ENCODE measurements at regions of chr22 and their contacts with region 1.

Region 1: GRCh38 chr22:35299673-35300497 is at the start of gene TOM1:
- DNase-seq: peak; percentile 95 to 99 (median 98)
- ATAC-seq: peak; percentile 84
- H3K4me3 ChIP-seq: peak within 1 kb of the TSS; percentile 63
- H3K4me3 Mint-ChIP-seq: peak within 1 kb of the TSS; percentile 100
- H3K27ac ChIP-seq: peak within 1 kb of the TSS; percentile 87 to 96
- H3K27ac Mint-ChIP-seq: peak within 1 kb of the TSS; percentile 96
- H3K4me1 ChIP-seq: peaks cover 46% of the 10 kb centered on the region
- H3K4me1 Mint-ChIP-seq: peaks cover 44% of the 10 kb centered on the region
- H3K27me3 ChIP-seq: no peaks in the 10 kb centered on the region
- H3K27me3 Mint-ChIP-seq: no peaks in the 10 kb centered on the region
- CTCF ChIP-seq: no peak
- total RNA-seq, gene TOM1: 211 to 219 TPM

Region 2: DNA sequence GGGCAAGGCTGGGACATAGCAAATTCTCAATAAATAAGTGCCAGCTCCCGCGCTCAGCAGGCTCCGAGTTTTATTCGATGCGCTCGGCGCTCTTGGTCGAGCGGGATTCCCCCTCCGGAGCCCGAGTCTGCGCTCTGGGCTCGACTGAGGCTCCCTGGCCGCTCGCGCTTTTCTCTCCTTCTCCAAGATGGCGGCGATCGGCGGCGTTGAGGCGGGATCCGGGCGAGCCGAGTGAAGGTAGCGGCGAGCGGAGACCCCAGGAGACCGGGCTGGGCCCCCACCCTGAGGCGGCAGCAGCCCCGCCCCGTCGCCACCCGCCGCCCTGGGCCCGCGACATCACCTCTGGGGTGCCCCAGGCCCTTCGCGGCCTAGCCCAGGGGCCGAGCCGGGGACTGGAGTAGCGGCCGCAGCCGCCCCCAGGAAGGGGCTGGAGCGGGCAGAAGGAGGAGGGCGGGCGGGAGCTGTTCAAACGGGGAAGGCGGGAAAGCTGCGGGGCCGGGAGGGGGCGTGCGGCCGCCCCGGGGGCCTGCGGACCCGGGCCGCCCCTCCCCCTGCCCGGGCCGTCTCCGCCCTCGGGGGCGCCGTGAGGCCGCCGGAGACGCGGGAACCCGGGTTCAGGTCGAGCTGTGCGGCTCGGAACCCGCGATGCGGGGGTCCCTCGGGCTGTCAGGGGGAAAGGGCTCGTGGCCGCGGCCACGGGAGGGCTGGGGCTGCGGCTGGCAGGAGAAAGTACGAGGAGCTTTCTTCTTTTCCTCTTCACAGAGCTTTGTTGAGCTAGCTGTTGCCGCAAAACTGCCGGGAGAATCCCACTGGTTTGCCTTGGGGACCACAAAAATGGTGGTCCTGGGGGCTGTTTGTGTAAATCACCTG is 42.3 kb before region 1 on chr22 and contains the start of gene HMGXB4:
- CTCF ChIA-PET with region 1: interaction called, 12 read pairs
- POLR2A ChIA-PET with region 1: interaction called, 66 read pairs
- intact Hi-C with region 1: loop called (anchors 1 to 5 kb)
- DNase-seq: peak; percentile 77 to 94 (median 82)
- ATAC-seq: peak; percentile 93
- H3K4me3 ChIP-seq: peak within 1 kb of the TSS; percentile 72
- H3K4me3 Mint-ChIP-seq: peak within 1 kb of the TSS; percentile 94
- H3K27ac ChIP-seq: peak within 1 kb of the TSS; percentile 60 to 85
- H3K27ac Mint-ChIP-seq: peak within 1 kb of the TSS; percentile 94
- H3K4me1 ChIP-seq: peaks cover 14% of the 10 kb centered on the region
- H3K4me1 Mint-ChIP-seq: peaks cover 31% of the 10 kb centered on the region
- H3K27me3 ChIP-seq: no peaks in the 10 kb centered on the region
- H3K27me3 Mint-ChIP-seq: no peaks in the 10 kb centered on the region
- CTCF ChIP-seq: peak; percentile 15
- total RNA-seq, gene HMGXB4: 41.4 to 44.1 TPM

Region 3: GRCh38 chr22:35313311-35314121 is 13.6 kb after region 1 on chr22:
- CTCF ChIA-PET with region 1: no interaction called
- POLR2A ChIA-PET with region 1: interaction called, 34 read pairs
- intact Hi-C with region 1: no loop called
- DNase-seq: peak in 2 of 14 experiments; percentile 27 to 29
- ATAC-seq: peak; percentile 17
- H3K4me3 ChIP-seq: no peak overlapping the region
- H3K4me3 Mint-ChIP-seq: no peak overlapping the region
- H3K27ac ChIP-seq: no peak overlapping the region
- H3K27ac Mint-ChIP-seq: no peak overlapping the region
- H3K4me1 ChIP-seq: peaks cover 75% of the 10 kb centered on the region
- H3K4me1 Mint-ChIP-seq: peaks cover 67% of the 10 kb centered on the region
- H3K27me3 ChIP-seq: no peaks in the 10 kb centered on the region
- H3K27me3 Mint-ChIP-seq: no peaks in the 10 kb centered on the region
- CTCF ChIP-seq: no peak

Region 4: GRCh38 chr22:35399678-35400334 is 99.9 kb after region 1 on chr22 and contains the start of gene MCM5:
- CTCF ChIA-PET with region 1: no interaction called
- POLR2A ChIA-PET with region 1: interaction called, 14 read pairs
- intact Hi-C with region 1: loop called (anchors 1 to 2 kb)
- DNase-seq: peak; percentile 94 to 99 (median 96)
- ATAC-seq: peak; percentile 98
- H3K4me3 ChIP-seq: peak within 1 kb of the TSS; percentile 87
- H3K4me3 Mint-ChIP-seq: peak within 1 kb of the TSS; percentile 98
- H3K27ac ChIP-seq: peak within 1 kb of the TSS; percentile 12 to 69
- H3K27ac Mint-ChIP-seq: peak within 1 kb of the TSS; percentile 95
- H3K4me1 ChIP-seq: peaks cover 34% of the 10 kb centered on the region
- H3K4me1 Mint-ChIP-seq: peaks cover 18% of the 10 kb centered on the region
- H3K27me3 ChIP-seq: no peaks in the 10 kb centered on the region
- H3K27me3 Mint-ChIP-seq: no peaks in the 10 kb centered on the region
- CTCF ChIP-seq: no peak
- total RNA-seq, gene MCM5: 21.6 to 22.6 TPM

Region 5: DNA sequence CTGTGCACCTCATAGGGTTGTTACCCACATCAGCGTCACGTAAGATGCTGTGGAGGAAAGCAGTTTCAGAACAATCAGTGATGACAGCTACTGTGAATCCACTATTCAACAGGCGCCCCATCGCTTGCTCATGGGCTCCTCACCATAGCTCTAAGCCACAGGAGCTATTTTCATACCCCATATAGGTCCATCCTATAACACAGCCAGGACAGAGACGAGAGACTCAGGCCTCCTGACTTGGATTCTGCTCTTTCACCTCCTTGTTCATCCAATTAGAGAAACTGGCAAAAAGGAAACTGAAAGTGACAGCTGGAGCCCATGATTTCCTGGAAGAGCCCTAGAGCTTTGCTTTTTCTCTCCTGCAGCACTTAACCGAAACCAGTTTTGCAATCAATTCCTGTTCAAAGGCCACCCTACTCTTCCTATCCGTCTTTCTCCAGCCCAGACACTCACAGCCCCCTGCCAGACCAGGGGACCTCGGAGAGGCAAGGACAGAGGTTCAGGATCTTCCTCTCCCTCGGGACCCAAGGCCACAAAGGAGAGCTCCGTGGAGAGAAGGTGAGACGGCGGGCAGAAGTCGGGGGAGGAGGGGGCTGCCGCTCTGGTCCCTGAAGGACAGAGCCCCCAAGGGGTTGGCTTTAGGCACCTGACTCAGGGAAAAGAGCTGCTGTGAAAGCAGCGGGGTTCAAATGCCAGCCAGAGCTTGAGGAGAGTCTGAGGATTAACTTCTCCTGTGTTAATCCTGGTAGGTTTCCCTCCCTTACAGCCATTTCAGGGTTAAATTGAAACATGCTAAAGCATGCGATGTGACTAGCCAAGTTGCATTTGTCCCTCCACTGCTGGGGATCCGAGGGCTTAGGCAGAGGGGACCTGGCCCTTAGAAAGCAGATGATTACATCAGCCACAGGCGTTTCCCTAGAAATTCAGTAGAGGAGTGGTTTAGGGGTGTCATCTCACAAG is 348.5 kb after region 1 on chr22 and contains the start of gene APOL6:
- CTCF ChIA-PET with region 1: no interaction called
- POLR2A ChIA-PET with region 1: interaction called, 22 read pairs
- intact Hi-C with region 1: no loop called
- DNase-seq: peak; percentile 24 to 92 (median 54)
- ATAC-seq: peak; percentile 79
- H3K4me3 ChIP-seq: peak within 1 kb of the TSS; percentile 76
- H3K4me3 Mint-ChIP-seq: peak within 1 kb of the TSS; percentile 100
- H3K27ac ChIP-seq: peak within 1 kb of the TSS; percentile 82 to 98
- H3K27ac Mint-ChIP-seq: peak within 1 kb of the TSS; percentile 98
- H3K4me1 ChIP-seq: peaks cover 35% of the 10 kb centered on the region
- H3K4me1 Mint-ChIP-seq: peaks cover 47% of the 10 kb centered on the region
- H3K27me3 ChIP-seq: no peaks in the 10 kb centered on the region
- H3K27me3 Mint-ChIP-seq: no peaks in the 10 kb centered on the region
- CTCF ChIP-seq: no peak
- total RNA-seq, gene APOL6: 39.3 TPM

Region 6: DNA sequence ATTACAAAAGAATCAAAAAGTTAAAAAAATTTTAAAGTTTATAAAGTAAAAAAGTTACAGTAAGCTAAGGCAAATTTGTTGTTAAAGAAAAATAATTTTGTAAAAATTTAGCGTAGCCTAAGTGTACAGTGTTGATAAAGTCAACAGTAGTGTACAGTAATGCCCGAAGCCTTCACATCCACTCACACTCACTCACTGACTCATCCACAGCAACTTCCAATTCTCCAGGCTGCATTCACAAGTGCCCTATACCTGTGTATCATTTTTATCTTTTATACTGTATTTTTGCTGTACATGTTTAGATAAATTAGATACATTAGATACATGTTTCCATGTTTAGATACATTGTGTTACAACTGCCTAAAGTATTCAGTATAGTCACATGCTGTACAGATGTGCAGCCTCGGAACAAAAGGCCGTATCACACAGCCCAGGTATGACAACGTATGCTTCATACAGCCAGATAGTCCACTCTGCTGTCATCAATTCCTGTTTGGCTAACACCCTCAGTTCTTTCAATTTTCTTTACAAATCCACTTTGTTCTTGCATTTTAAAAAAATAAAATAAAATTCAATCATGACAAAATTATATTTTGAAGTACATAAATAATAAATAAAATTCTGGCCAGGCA is 648.0 kb after region 1 on chr22:
- CTCF ChIA-PET with region 1: no interaction called
- POLR2A ChIA-PET with region 1: no interaction called
- intact Hi-C with region 1: no loop called
- DNase-seq: no peak
- ATAC-seq: no peak
- H3K4me3 ChIP-seq: no peak overlapping the region
- H3K4me3 Mint-ChIP-seq: no peak overlapping the region
- H3K27ac ChIP-seq: no peak overlapping the region
- H3K27ac Mint-ChIP-seq: no peak overlapping the region
- H3K4me1 ChIP-seq: no peaks in the 10 kb centered on the region
- H3K4me1 Mint-ChIP-seq: no peaks in the 10 kb centered on the region
- H3K27me3 ChIP-seq: peaks cover 0 to 3% of the 10 kb centered on the region in 2 experiments
- H3K27me3 Mint-ChIP-seq: no peaks in the 10 kb centered on the region
- CTCF ChIP-seq: no peak